Heart right ventricle (tissue), 16 donors: ENCODE measurements at regions of chr10 and their contacts with region 1.

Region 1: DNA sequence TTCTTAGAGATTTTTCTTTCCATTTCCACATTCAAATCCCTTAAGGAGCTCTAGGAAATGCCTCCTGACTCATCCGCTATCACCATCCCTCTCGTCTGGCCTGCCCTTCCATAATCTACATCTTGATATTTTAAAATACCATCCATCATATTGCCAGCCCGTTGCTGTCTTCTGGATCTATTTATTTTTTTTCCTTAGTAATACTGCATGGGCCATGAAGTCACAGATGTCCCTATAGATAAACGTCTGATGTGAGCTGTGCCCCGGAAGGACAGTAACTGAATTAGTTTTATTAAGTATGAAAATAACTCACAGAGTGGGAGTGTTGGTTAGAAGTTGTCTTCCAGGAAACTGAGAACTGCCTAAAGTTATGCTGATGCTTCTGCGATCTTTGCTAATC is 76.2 kb downstream of the KLF6 start:
- DNase-seq: no peak
- ATAC-seq: no peak
- H3K4me3 ChIP-seq: no peak overlapping the region
- H3K27ac ChIP-seq: no peak overlapping the region
- H3K4me1 ChIP-seq: peaks cover 0 to 11% (median 4%) of the 10 kb centered on the region in 9 donors
- H3K27me3 ChIP-seq: no peaks in the 10 kb centered on the region
- CTCF ChIP-seq: no peak

Region 2: GRCh38 chr10:2772816-2773631 is 935.8 kb before region 1 on chr10:
- intact Hi-C with region 1: loop called in 1 of 10 experiments (anchors 10 kb)
- DNase-seq: no peak
- ATAC-seq: no peak
- H3K4me3 ChIP-seq: no peak overlapping the region
- H3K27ac ChIP-seq: no peak overlapping the region
- H3K4me1 ChIP-seq: no peaks in the 10 kb centered on the region
- H3K27me3 ChIP-seq: peaks cover 0 to 4% (median 0%) of the 10 kb centered on the region in 7 donors
- CTCF ChIP-seq: no peak

Region 3: DNA sequence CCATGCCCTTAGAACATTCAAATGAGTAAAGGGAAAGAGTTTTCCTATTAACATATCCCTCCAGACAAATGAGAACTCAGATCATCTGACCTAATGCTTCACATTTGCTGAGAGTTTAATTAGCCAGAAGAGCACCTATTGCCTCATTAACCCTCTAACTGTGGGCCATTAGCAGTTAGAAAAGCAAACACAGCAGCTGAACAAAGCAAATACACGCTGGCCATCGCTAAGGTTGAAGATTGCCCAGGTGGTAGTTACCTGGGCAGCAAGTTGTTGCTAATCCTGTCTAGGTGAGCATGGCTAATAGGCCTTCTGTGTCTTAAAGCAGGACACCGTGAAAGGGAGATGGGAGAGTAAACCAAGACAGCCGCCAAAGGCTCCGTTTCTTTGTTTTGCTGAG is 1606.0 kb after region 1 on chr10:
- intact Hi-C with region 1: loop called in 1 of 10 experiments (anchors 5 kb)
- DNase-seq: no peak
- ATAC-seq: no peak
- H3K4me3 ChIP-seq: no peak overlapping the region
- H3K27ac ChIP-seq: no peak overlapping the region
- H3K4me1 ChIP-seq: peaks cover 0 to 9% (median 0%) of the 10 kb centered on the region in 9 donors
- H3K27me3 ChIP-seq: peaks cover 0 to 6% (median 0%) of the 10 kb centered on the region in 7 donors
- CTCF ChIP-seq: no peak